CD4-positive, alpha-beta memory T cell (primary cell): ENCODE measurements at regions of chrX and their contacts with region 1.

Region 1: GRCh38 chrX:53317365-53318069 is 36.1 kb upstream of the IQSEC2 start:
- DNase-seq: peak; percentile 64 to 74 (median 70)
- H3K4me3 ChIP-seq: no peak overlapping the region
- H3K4me3 Mint-ChIP-seq: peak overlapping the region in 3 of 8 donors; percentile 46 to 65 (median 50)
- H3K27ac ChIP-seq: no peak overlapping the region
- H3K27ac Mint-ChIP-seq: no peak overlapping the region
- H3K4me1 ChIP-seq: peaks cover 16% of the 10 kb centered on the region
- H3K4me1 Mint-ChIP-seq: peaks cover 12 to 28% (median 17%) of the 10 kb centered on the region in 4 donors
- H3K27me3 ChIP-seq: peaks cover 8% of the 10 kb centered on the region
- H3K27me3 Mint-ChIP-seq: peaks cover 16 to 20% of the 10 kb centered on the region in 2 donors

Region 2: GRCh38 chrX:53303195-53303594 is 14.3 kb before region 1 on chrX:
- CTCF ChIA-PET with region 1: interaction called, 12 read pairs
- POLR2A ChIA-PET with region 1: no interaction called
- intact Hi-C with region 1: no loop called
- DNase-seq: no peak
- H3K4me3 ChIP-seq: no peak overlapping the region
- H3K4me3 Mint-ChIP-seq: no peak overlapping the region
- H3K27ac ChIP-seq: no peak overlapping the region
- H3K27ac Mint-ChIP-seq: no peak overlapping the region
- H3K4me1 ChIP-seq: no peaks in the 10 kb centered on the region
- H3K4me1 Mint-ChIP-seq: no peaks in the 10 kb centered on the region
- H3K27me3 ChIP-seq: no peaks in the 10 kb centered on the region
- H3K27me3 Mint-ChIP-seq: no peaks in the 10 kb centered on the region

Region 3: DNA sequence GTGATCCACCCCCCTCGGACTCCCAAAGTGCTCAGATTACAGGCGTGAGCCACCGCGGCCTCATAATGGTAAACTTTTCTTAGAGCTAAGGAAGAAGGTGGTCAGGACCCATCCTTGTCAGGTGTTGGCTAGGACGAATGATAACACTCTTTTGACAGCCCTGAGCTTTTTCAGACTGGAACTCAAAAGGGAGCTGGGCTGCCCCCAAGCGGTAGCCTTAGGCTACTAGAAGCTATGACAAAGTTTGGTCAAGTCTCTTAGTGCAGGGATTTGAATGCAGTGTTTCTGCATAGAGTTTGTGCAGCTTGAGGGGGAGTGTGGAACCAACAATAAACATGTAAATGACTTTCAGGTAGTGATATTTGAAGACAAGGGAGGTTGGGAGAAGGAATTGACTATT is 128.5 kb after region 1 on chrX:
- CTCF ChIA-PET with region 1: interaction called, 26 read pairs
- POLR2A ChIA-PET with region 1: no interaction called
- intact Hi-C with region 1: loop called (anchors 1 kb)
- DNase-seq: peak; percentile 27 to 43 (median 36)
- H3K4me3 ChIP-seq: no peak overlapping the region
- H3K4me3 Mint-ChIP-seq: no peak overlapping the region
- H3K27ac ChIP-seq: no peak overlapping the region
- H3K27ac Mint-ChIP-seq: no peak overlapping the region
- H3K4me1 ChIP-seq: no peaks in the 10 kb centered on the region
- H3K4me1 Mint-ChIP-seq: peaks cover 0 to 14% (median 1%) of the 10 kb centered on the region in 4 donors
- H3K27me3 ChIP-seq: no peaks in the 10 kb centered on the region
- H3K27me3 Mint-ChIP-seq: no peaks in the 10 kb centered on the region

Region 4: DNA sequence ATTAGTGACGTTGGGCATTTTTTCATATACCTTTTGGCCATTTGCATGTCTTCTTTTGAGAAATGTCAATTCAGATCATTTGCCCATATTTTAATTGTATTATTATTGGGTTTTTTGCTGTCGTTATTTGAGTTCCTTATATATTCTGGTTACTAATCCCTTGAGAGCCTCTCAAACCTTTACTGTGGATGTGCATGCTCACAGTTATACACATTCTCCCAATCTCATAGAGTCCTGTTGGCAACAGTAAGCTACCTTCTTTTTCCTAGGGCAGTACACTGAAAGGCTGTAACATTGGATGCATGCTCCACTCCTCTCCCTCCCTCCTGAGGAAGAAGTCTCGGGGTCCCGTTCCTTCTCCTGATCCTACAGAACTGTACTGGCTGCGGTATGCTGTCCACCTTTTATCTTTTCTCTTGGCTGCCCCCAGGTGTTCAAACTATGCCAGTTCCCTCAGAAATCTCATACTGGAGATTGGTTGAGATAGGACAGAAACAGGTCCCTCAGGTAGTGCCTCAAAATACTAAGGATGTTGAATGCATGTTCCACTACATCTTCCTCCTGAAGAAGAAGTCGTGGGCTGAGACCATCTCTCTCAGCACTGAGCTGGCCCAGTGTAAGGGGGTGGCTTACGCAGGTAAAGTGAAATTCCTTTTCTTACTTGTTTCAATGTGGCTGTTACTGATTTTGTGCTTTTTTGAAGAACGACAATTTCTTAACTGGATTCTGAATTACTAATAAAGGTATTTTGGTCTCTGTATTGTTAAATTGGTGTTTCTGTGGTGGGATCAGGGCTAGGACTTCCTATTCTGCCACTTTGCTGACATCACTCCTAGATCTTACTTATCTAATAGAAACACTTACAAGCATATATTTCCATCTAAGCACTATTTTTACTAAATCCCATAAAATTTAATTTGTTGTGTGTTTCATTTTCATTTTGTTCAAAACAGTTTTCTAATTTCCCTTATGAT is 514.4 kb after region 1 on chrX:
- CTCF ChIA-PET with region 1: no interaction called
- POLR2A ChIA-PET with region 1: no interaction called
- intact Hi-C with region 1: loop called (anchors 5 kb)
- DNase-seq: peak; percentile 32 to 45 (median 38)
- H3K4me3 ChIP-seq: no peak overlapping the region
- H3K4me3 Mint-ChIP-seq: no peak overlapping the region
- H3K27ac ChIP-seq: no peak overlapping the region
- H3K27ac Mint-ChIP-seq: peak overlapping the region in 1 of 7 donors; percentile 75
- H3K4me1 ChIP-seq: no peaks in the 10 kb centered on the region
- H3K4me1 Mint-ChIP-seq: peaks cover 2 to 6% (median 4%) of the 10 kb centered on the region in 4 donors
- H3K27me3 ChIP-seq: no peaks in the 10 kb centered on the region
- H3K27me3 Mint-ChIP-seq: no peaks in the 10 kb centered on the region